Activated CD4-positive, alpha-beta T cell treated with anti-CD3 and anti-CD28 coated beads for 36 hours (primary cell): ENCODE measurements at regions of chr9 and their contacts with region 1.

Region 1: DNA sequence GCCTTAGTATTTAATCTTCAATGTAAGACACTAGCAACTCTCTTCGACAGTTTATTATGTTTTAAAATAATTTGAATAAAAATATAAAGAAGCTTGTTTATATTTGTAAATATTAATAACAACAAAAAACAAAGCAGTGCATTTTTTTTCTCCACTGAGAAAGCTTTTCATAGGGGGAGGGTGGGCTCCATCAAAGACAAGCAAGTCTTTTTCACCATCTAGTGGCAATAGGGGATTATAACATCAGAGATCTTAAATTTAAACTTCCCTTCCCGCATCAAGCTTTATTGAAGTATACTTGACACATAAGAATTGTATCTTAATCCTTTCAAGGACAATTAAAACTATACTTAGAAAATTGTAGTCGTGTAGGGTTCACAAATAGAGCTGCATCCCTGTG is 9.3 kb upstream of the OR13F1 start:
- DNase-seq: no peak
- ATAC-seq: no peak
- H3K4me3 Mint-ChIP-seq: no peak overlapping the region
- H3K27ac Mint-ChIP-seq: no peak overlapping the region
- H3K4me1 Mint-ChIP-seq: no peaks in the 10 kb centered on the region
- H3K27me3 Mint-ChIP-seq: no peaks in the 10 kb centered on the region

Region 2: DNA sequence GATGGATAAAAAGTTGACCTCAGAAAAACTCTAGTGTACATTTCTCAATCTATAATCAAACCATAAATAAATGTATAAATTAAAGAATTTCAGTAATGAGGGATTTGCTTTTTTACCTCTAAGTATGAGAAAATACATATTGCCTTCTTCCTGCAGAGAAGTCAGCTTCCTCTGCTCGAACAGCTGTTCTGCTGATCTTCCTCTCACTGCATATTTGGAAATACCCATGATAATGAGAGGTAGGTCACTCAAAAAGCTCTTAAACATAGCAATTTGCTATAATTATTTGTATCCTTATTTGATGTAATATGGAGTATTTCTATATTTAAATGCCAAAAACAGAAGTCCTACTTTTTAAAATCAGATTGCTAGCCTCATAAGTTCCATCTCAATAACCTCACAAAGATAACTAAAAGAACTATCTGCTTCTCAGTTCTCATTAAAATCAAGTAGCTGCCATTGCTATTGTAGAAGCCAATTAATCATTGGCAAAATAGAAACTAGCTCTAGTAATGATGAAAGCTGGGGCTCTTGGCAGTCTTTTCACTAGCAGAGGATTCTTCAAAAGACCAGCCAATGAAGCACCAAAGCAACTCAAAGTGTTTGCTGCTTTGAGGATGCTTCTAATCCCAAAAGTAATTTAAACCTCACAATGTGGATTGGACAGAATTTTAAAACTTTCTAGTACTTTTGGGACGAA is 163.8 kb after region 1 on chr9:
- CTCF ChIA-PET with region 1: no interaction called
- POLR2A ChIA-PET with region 1: no interaction called
- intact Hi-C with region 1: loop called in 1 of 2 experiments (anchors 10 kb)
- DNase-seq: no peak
- ATAC-seq: no peak
- H3K4me3 Mint-ChIP-seq: no peak overlapping the region
- H3K27ac Mint-ChIP-seq: no peak overlapping the region
- H3K4me1 Mint-ChIP-seq: no peaks in the 10 kb centered on the region
- H3K27me3 Mint-ChIP-seq: no peaks in the 10 kb centered on the region